Activated naive CD4-positive, alpha-beta T cell treated with anti-CD3 and anti-CD28 coated beads for 36 hours (primary cell): ENCODE measurements at regions of chr21 and their contacts with region 1.

Region 1: DNA sequence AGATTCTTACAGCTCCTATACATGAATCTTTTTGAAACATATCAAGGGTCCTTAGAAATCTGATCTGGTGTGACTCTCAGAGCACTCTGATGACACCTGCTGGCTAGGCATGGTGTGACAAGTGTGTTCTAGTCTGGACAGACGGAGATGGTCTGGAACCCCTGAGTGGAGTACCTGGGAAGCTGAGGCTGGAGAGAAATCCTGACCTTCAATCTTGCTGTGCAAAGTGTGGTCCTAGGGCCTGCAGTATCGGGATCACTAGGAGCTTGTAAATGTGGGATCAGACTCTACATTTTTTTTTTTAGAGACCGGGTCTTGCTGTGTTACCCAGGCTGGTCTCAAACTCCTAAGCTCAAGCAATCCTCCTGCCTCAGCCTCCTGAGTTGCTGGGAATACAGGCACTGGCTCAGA is 78.6 kb upstream of the SOD1 start:
- DNase-seq: peak; percentile 88
- H3K4me3 Mint-ChIP-seq: no peak overlapping the region
- H3K27ac Mint-ChIP-seq: no peak overlapping the region
- H3K4me1 Mint-ChIP-seq: peaks cover 2% of the 10 kb centered on the region
- H3K27me3 Mint-ChIP-seq: no peaks in the 10 kb centered on the region

Region 2: GRCh38 chr21:31098576-31099005 is 482.3 kb before region 1 on chr21:
- CTCF ChIA-PET with region 1: interaction called, 58 read pairs
- intact Hi-C with region 1: loop called (anchors 1 kb)
- DNase-seq: peak; percentile 83
- H3K4me3 Mint-ChIP-seq: peak overlapping the region; percentile 29
- H3K27ac Mint-ChIP-seq: no peak overlapping the region
- H3K4me1 Mint-ChIP-seq: peaks cover 24% of the 10 kb centered on the region
- H3K27me3 Mint-ChIP-seq: peaks cover 3% of the 10 kb centered on the region

Region 3: GRCh38 chr21:31198575-31198974 is 382.3 kb before region 1 on chr21:
- CTCF ChIA-PET with region 1: interaction called, 131 read pairs
- intact Hi-C with region 1: loop called (anchors 1 kb)
- DNase-seq: no peak
- H3K4me3 Mint-ChIP-seq: no peak overlapping the region
- H3K27ac Mint-ChIP-seq: no peak overlapping the region
- H3K4me1 Mint-ChIP-seq: peaks cover 51% of the 10 kb centered on the region
- H3K27me3 Mint-ChIP-seq: no peaks in the 10 kb centered on the region

Region 4: GRCh38 chr21:31343680-31344480 is 237.0 kb before region 1 on chr21 and contains the start of gene TIAM1:
- CTCF ChIA-PET with region 1: interaction called, 11 read pairs
- intact Hi-C with region 1: no loop called
- DNase-seq: peak; percentile 58
- H3K4me3 Mint-ChIP-seq: peak within 1 kb of the TSS; percentile 91
- H3K27ac Mint-ChIP-seq: peak within 1 kb of the TSS; percentile 88
- H3K4me1 Mint-ChIP-seq: peaks cover 58% of the 10 kb centered on the region
- H3K27me3 Mint-ChIP-seq: no peaks in the 10 kb centered on the region
- total RNA-seq, gene TIAM1: 50.1 to 51.0 TPM

Region 5: DNA sequence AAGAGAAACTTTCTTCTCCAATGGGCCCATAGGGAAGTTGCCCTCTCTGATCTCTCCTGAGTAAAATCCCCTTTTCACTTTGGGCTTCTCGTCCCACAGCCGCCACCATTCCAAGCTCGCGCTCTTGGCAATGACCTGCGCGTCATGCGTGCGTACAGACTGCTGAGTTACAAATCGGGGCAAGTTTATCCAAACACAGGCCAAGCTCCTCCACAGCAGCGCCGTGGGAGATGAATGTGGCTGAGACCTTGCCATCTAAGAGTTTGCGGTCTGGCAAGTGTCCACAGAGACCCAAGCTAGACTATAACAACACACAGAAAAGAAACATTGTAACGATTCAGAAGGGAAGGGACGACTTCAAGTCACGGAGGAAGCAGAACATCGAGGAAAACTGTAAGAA is 37.7 kb before region 1 on chr21:
- CTCF ChIA-PET with region 1: interaction called, 12 read pairs
- intact Hi-C with region 1: loop called (anchors 2 kb)
- DNase-seq: no peak
- H3K4me3 Mint-ChIP-seq: no peak overlapping the region
- H3K27ac Mint-ChIP-seq: no peak overlapping the region
- H3K4me1 Mint-ChIP-seq: no peaks in the 10 kb centered on the region
- H3K27me3 Mint-ChIP-seq: no peaks in the 10 kb centered on the region

Region 6: DNA sequence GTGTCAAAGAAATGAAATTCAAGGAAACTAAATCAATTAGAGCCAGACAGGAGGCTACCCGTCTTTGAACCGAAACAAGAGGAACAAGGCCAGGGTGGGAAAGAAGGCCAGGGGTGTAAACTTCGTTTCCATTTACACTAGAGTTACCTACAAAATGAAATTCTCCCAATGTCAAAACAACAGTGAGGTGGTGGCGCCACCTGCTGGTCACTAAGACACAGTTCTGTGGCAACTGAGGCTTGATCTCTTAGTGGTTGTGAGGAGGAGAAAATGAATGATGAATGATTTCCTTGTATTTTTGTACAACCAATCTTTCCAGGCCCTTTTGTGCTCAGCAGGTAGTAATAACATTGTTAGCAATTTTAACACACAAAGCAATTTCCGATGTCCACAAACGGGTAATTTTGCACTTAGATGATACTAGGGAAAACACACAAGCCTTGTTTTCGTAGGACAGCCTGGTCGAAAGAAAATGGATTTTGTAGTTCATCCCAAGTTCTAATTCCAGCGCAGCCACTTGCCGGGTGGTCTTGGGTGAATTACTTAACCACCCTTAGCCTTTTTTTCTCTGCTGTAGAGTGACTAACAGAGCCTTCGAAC is 23.8 kb after region 1 on chr21:
- CTCF ChIA-PET with region 1: interaction called, 23 read pairs
- intact Hi-C with region 1: loop called (anchors 1 kb)
- DNase-seq: peak; percentile 83
- H3K4me3 Mint-ChIP-seq: no peak overlapping the region
- H3K27ac Mint-ChIP-seq: no peak overlapping the region
- H3K4me1 Mint-ChIP-seq: peaks cover 7% of the 10 kb centered on the region
- H3K27me3 Mint-ChIP-seq: no peaks in the 10 kb centered on the region

Region 7: GRCh38 chr21:31696424-31696823 is 115.6 kb after region 1 on chr21:
- CTCF ChIA-PET with region 1: no interaction called
- intact Hi-C with region 1: no loop called
- DNase-seq: no peak
- H3K4me3 Mint-ChIP-seq: no peak overlapping the region
- H3K27ac Mint-ChIP-seq: no peak overlapping the region
- H3K4me1 Mint-ChIP-seq: peaks cover 4% of the 10 kb centered on the region
- H3K27me3 Mint-ChIP-seq: no peaks in the 10 kb centered on the region